ENCODE measurements at regions of chr2 and their contacts with region 1.

Region 1: GRCh38 chr2:109392816-109393661 is 220.7 kb downstream of the SEPTIN10 start:
- DNase-seq: no peak
- ATAC-seq: no peak

Region 2: GRCh38 chr2:110903548-110903947 is 1510.5 kb after region 1 on chr2:
- intact Hi-C with region 1: loop called (anchors 5 kb)
- DNase-seq: no peak
- ATAC-seq: no peak

Measured in sciatic nerve (tissue), 2 donors.